ENCODE measurements at regions of chr12 and their contacts with region 1.

Region 1: DNA sequence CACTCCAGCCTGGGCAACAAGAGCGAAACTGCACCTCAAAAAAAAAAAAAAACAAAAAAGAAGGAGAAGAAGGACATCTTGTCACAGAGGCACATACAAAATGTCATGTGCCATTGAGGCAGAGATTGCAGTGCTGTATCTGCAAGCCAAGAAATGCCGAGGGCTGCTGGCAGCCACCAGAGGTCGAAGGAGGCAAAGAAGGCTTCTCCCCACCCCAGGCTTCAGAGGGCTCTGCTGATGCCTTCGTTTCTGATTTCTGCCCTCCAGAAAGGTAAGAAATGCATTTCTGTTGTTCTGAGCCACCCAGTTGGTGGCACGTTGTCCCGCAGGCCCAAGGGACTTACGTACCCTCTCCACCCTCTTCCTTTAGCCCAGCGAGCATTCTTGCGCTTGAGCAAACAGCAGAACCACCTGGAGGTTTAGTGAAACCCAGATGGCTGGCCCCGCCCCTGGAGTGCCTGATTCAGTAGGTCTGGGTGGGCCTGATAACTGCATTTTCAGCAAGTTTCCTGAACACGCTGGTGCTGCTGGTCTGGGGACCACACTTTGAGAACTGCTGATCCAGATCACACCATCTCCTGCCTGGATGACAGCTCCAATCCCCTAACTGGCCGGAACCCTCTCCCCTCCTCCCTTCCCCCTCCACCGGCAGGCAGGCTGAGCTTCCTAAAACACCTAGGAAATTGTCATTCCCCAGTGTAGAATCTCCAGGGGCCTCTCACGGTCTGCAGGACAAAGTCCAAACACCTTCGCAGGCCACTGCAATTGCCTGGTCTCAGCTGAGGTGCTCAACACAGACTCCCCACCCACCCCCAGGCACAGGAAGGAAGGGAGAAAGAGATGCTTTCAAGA is 21.1 kb upstream of the SCARB1 start:
- DNase-seq: no peak
- H3K4me3 ChIP-seq: no peak overlapping the region
- H3K27ac ChIP-seq: no peak overlapping the region
- H3K4me1 ChIP-seq: peaks cover 0 to 14% (median 7%) of the 10 kb centered on the region in 4 experiments; a peak in 6 of 7 replicates
- H3K27me3 ChIP-seq: no peaks in the 10 kb centered on the region
- CTCF ChIP-seq: no peak
- EP300 ChIP-seq: no peak
- POLR2A ChIP-seq: no peak
- RAD21 ChIP-seq: no peak

Region 2: GRCh38 chr12:124898200-124898922 is 13.5 kb after region 1 on chr12:
- CTCF ChIA-PET with region 1: interaction called, 25 read pairs
- POLR2A ChIA-PET with region 1: interaction called, 3 read pairs
- DNase-seq: peak; percentile 53 to 87
- H3K4me3 ChIP-seq: no peak overlapping the region
- H3K27ac ChIP-seq: no peak overlapping the region
- H3K4me1 ChIP-seq: no peaks in the 10 kb centered on the region; a peak in 1 of 7 replicates
- H3K27me3 ChIP-seq: no peaks in the 10 kb centered on the region
- CTCF ChIP-seq: peak; percentile 95 to 99 (median 97)
- EP300 ChIP-seq: no peak
- POLR2A ChIP-seq: no peak
- RAD21 ChIP-seq: peak; percentile 81 to 84